GM12878 (cell line): ENCODE measurements at regions of chr21 and their contacts with region 1.

Region 1: DNA sequence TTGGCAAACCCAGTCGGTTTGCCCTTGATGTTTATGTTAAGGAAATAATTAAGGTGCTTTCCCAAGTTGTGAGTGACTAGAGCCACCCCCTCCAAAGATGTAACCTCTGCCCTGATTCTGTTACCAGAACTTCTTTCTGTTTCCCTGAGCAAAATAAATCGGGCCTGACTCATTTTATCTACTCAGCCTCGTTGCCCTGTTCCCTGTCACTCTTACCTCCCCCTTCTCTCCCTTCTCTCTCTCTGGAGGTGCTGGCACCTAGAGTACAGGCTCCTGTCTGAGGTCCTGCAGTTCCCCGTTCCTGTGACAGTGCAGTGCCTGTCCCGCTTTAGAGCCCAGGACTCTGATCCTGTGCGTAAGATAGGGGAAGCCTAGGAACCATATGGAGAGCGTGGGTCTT is 35.4 kb downstream of the CXADR start:
- DNase-seq: no peak
- ATAC-seq: no peak
- H3K4me3 ChIP-seq: no peak overlapping the region
- H3K27ac ChIP-seq: no peak overlapping the region
- H3K4me1 ChIP-seq: no peaks in the 10 kb centered on the region
- H3K27me3 ChIP-seq: no peaks in the 10 kb centered on the region
- CTCF ChIP-seq: no peak
- EP300 ChIP-seq: no peak
- POLR2A ChIP-seq: no peak
- RAD21 ChIP-seq: no peak

Region 2: DNA sequence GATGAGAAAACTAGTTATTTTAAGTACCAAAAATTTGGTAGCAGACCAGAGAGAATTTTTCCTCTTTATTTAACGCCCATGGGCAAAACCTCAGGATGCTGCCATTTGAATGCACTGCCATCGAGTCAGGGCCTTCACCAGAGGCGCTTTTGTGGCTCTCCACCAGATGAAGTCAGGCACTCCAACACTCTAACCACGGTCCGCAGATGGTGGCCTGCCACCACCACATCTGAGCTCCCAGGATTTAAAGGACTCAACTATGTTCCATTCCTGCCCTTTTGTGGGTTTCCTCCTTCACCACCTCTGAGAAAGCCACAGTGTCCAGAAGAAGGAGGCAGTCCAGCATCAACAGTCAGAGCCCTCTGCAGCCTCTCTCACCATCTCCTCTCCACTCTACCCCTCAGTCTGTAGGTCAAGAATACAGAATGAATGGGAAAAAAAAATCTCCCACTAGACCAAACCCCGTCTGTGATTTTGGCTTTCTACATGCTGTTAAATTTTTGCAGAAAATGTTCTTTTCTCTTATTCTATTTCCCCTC is 1171.1 kb before region 1 on chr21:
- CTCF ChIA-PET with region 1: no interaction called
- POLR2A ChIA-PET with region 1: interaction called, 10 read pairs
- RAD21 ChIA-PET with region 1: no interaction called
- SMC1A ChIA-PET with region 1: no interaction called
- in situ Hi-C with region 1: no loop called
- intact Hi-C with region 1: no loop called
- DNase-seq: no peak
- ATAC-seq: no peak
- H3K4me3 ChIP-seq: no peak overlapping the region
- H3K27ac ChIP-seq: no peak overlapping the region
- H3K4me1 ChIP-seq: no peaks in the 10 kb centered on the region
- H3K27me3 ChIP-seq: no peaks in the 10 kb centered on the region
- CTCF ChIP-seq: no peak
- EP300 ChIP-seq: no peak
- POLR2A ChIP-seq: no peak
- RAD21 ChIP-seq: no peak

Region 3: GRCh38 chr21:17512253-17513213 is 35.7 kb before region 1 on chr21 and contains the start of gene CXADR:
- CTCF ChIA-PET with region 1: no interaction called
- POLR2A ChIA-PET with region 1: no interaction called
- RAD21 ChIA-PET with region 1: no interaction called
- SMC1A ChIA-PET with region 1: no interaction called
- in situ Hi-C with region 1: no loop called
- intact Hi-C with region 1: no loop called
- DNase-seq: no peak
- ATAC-seq: peak; percentile 73
- H3K4me3 ChIP-seq: peak within 1 kb of the TSS; percentile 71
- H3K27ac ChIP-seq: no peak within 1 kb of the TSS
- H3K4me1 ChIP-seq: no peaks in the 10 kb centered on the region; the same call in 1 of the 2 replicates
- H3K27me3 ChIP-seq: peaks cover 0 to 4% of the 10 kb centered on the region in 2 experiments; a peak in 1 of 4 replicates
- CTCF ChIP-seq: peak in 2 of 3 experiments; percentile 26 to 56; a peak in 3 of 6 replicates
- EP300 ChIP-seq: no peak
- POLR2A ChIP-seq: peak; percentile 49; the same call in 1 of the 2 replicates
- RAD21 ChIP-seq: no peak
- polyA plus RNA-seq, gene CXADR: 0.04 to 0.31 TPM